Dorsolateral prefrontal cortex (tissue), 120 donors: ENCODE measurements at regions of chr1 and their contacts with region 1.

Region 1: GRCh38 chr1:223123011-223123610 is 19.9 kb downstream of the TLR5 start:
- DNase-seq: no peak
- H3K4me3 ChIP-seq: no peak overlapping the region
- H3K27ac ChIP-seq: no peak overlapping the region
- H3K27me3 ChIP-seq: peaks cover 0 to 26% (median 0%) of the 10 kb centered on the region in 45 donors
- CTCF ChIP-seq: no peak

Region 2: GRCh38 chr1:222792744-222793143 is 330.4 kb before region 1 on chr1:
- intact Hi-C with region 1: loop called (anchors 5 kb)
- DNase-seq: no peak
- H3K4me3 ChIP-seq: no peak overlapping the region
- H3K27ac ChIP-seq: no peak overlapping the region
- H3K27me3 ChIP-seq: peaks cover 0 to 12% (median 0%) of the 10 kb centered on the region in 45 donors
- CTCF ChIP-seq: peak; percentile 26 to 90 (median 68)

Region 3: GRCh38 chr1:223216531-223217205 is 93.6 kb after region 1 on chr1:
- intact Hi-C with region 1: no loop called
- DNase-seq: no peak
- H3K4me3 ChIP-seq: no peak overlapping the region
- H3K27ac ChIP-seq: no peak overlapping the region
- H3K27me3 ChIP-seq: no peaks in the 10 kb centered on the region
- CTCF ChIP-seq: no peak